ENCODE measurements at regions of chr18 and their contacts with region 1.

Region 1: DNA sequence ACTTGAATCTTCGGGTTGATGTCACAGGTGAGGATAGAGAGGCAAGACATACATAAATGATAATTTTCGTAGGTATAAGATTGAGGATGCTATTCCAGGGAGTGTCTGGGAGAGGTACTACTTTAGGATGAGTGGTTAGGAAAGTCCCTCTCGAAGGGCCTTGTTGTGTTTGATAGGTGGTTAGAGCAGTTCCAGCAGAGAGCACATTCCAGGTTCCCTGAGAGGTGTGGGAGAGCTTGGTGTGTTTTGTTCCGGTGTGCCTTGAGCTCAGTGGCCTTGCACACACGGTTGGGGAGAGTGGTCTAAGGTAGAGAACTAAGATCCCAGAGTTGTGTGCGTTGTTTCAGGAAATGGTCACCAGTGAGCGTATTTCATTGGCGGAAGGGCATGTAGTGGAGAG is 191.4 kb downstream of the ZNF407 start:
- DNase-seq: no peak
- H3K4me3 ChIP-seq: no peak overlapping the region
- H3K27ac ChIP-seq: no peak overlapping the region
- H3K4me1 ChIP-seq: no peaks in the 10 kb centered on the region
- H3K27me3 ChIP-seq: no peaks in the 10 kb centered on the region
- CTCF ChIP-seq: no peak
- EP300 ChIP-seq: no peak
- POLR2A ChIP-seq: no peak

Region 2: DNA sequence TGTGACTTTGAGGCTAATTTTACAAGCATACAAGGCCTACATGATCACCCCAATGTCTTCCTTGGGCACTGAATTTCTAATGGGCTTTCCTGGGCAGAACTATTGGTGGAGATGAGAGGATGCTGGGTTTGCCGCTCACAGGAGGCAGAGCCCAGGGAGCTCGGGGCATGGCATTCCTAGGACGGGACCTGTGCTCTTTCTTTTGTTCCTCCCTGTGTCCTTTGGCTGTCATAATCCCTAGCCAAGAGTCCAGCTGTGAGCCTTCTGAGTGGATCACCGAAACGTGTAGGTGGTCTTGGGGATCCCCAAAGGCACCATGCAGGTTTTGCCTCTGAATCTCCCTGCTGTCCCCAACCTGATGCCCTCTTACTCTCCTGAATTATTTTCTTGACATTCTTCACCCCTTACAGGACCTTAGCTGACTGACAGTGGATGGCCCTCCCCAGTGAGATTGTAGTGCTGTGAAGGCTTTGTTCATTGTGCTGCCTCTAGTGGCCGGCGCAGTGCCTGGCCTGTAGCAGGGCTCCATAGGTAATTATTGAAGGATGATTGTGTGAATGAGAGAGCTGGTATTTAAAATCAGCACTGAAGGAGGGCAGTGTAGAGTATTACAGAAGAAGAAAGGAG is 30.5 kb after region 1 on chr18:
- intact Hi-C with region 1: loop called in 1 of 4 experiments (anchors 2 kb)
- DNase-seq: no peak
- H3K4me3 ChIP-seq: no peak overlapping the region
- H3K27ac ChIP-seq: no peak overlapping the region
- H3K4me1 ChIP-seq: no peaks in the 10 kb centered on the region
- H3K27me3 ChIP-seq: no peaks in the 10 kb centered on the region
- CTCF ChIP-seq: no peak
- EP300 ChIP-seq: no peak
- POLR2A ChIP-seq: no peak

Measured in ovary (tissue), 10 donors.